AG04450 (cell line): ENCODE measurements at regions of chr9 and their contacts with region 1.

Region 1: DNA sequence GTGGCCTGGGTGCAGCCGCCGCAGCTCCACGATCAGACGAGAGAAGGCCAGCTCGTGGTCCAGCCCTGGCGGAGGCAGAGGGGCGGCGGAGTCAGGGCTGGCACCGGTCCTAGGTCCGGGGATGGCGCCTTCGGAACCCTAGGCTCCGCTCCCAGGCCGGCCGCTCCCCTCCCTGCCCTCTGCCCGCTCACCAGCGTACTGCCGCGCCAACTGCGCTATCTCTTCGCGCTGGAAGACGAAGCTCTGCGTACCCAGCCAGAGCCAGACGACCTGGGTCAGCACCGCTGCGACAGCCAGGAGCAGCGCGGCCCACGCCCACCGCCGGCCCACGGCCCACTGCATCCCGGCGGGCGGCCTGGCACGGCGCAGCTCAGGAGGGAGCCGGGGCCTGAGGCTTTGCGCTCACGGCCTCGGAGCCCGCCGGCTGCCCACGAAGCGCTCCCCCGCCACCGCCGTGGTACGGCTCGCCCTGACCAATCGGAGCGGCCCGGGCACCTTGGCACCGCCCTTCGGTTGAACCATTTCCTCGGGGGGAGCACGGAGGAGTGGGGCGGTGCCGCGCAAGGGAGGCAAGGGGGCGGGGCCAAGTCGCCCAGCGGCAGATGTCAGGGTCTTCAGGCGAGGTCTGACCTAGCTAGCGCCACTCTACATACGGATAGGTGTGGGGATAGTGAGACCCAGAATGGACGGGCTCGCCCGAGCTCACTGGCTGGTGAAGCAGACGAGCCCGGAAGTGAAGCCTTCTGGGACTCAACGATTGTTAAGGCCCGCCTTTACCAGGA is at the start of gene SIGMAR1:
- DNase-seq: peak; percentile 82
- H3K4me3 ChIP-seq: peak within 1 kb of the TSS; percentile 80
- H3K27ac ChIP-seq: peak within 1 kb of the TSS; percentile 11
- H3K27me3 ChIP-seq: no peaks in the 10 kb centered on the region
- CTCF ChIP-seq: no peak
- polyA plus RNA-seq, gene SIGMAR1: 38.9 and 56.9 TPM in 2 replicates

Region 2: GRCh38 chr9:34611829-34612630 is 25.5 kb before region 1 on chr9 and contains the start of gene RPP25L:
- CTCF ChIA-PET with region 1: interaction called, 111 read pairs
- POLR2A ChIA-PET with region 1: interaction called, 3 read pairs
- DNase-seq: peak; percentile 42
- H3K4me3 ChIP-seq: peak within 1 kb of the TSS; percentile 86
- H3K27ac ChIP-seq: peak within 1 kb of the TSS; percentile 47
- H3K27me3 ChIP-seq: no peaks in the 10 kb centered on the region
- CTCF ChIP-seq: no peak
- polyA plus RNA-seq, gene RPP25L: 19.4 and 25.4 TPM in 2 replicates

Region 3: GRCh38 chr9:34620061-34620994 is 17.2 kb before region 1 on chr9 and contains the start of gene DCTN3:
- CTCF ChIA-PET with region 1: interaction called, 111 read pairs
- POLR2A ChIA-PET with region 1: interaction called, 15 read pairs
- DNase-seq: peak; percentile 82
- H3K4me3 ChIP-seq: peak within 1 kb of the TSS; percentile 96
- H3K27ac ChIP-seq: peak within 1 kb of the TSS; percentile 11
- H3K27me3 ChIP-seq: peaks cover 26% of the 10 kb centered on the region
- CTCF ChIP-seq: no peak
- polyA plus RNA-seq, gene DCTN3: 97.6 and 103 TPM in 2 replicates